Heart right ventricle (tissue), 16 donors: ENCODE measurements at regions of chr11 and their contacts with region 1.

Region 1: GRCh38 chr11:11265994-11266606 is 87.0 kb downstream of the CSNK2A3 start:
- DNase-seq: peak; percentile 27 to 62
- ATAC-seq: peak in 6 of 8 donors; percentile 43 to 81 (median 60)
- H3K4me3 ChIP-seq: no peak overlapping the region
- H3K27ac ChIP-seq: no peak overlapping the region
- H3K4me1 ChIP-seq: peaks cover 0 to 15% (median 8%) of the 10 kb centered on the region in 9 donors
- H3K27me3 ChIP-seq: no peaks in the 10 kb centered on the region
- CTCF ChIP-seq: peak; percentile 63 to 87 (median 85)

Region 2: DNA sequence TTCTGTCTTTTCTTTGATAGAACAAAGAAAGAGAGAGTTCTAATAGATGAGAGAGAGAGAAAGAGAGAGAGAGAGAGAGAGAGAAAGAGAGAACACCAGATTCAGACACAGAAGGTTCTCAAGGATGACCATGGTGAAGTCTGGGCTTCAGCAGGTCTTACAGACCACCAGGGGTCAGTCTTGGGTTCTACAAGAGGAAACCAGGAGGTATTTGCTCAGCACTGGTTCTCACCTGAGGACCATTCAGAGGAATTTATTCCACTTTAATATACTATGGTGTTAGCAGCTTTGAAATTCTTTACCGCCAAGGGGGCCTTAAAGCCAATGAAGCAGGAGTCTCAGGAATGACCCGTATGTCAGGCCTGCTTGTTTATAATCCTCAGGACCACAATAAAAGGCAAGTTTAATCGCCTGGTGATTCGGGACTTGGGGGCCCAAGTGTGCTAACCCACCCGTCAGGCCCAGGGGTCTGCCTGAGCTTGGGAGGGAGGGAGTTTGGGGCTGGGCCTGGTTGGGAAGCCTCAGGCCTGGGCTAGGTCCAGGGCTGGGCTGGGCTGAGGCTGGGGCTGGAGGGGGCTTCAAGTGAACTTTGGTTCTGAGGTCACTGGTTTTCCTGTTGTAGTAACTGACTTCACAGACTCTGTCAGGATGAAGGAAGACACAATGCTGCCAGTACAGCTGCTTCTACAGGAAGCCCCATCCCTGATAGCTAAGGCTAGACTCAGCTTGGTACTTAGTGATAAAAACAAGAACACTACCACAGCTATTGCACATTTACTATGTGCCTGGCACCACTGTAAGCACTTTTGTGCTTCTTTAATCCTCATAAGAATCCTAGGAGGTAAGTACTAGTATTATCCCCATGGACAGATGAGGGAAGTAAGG is 229.0 kb before region 1 on chr11:
- intact Hi-C with region 1: loop called in 9 of 10 experiments (anchors 1 to 10 kb)
- DNase-seq: peak in 1 of 2 donors; percentile 57
- ATAC-seq: peak in 7 of 8 donors; percentile 74 to 88 (median 85)
- H3K4me3 ChIP-seq: no peak overlapping the region
- H3K27ac ChIP-seq: no peak overlapping the region
- H3K4me1 ChIP-seq: peaks cover 0 to 8% (median 0%) of the 10 kb centered on the region in 9 donors
- H3K27me3 ChIP-seq: no peaks in the 10 kb centered on the region
- CTCF ChIP-seq: peak; percentile 66 to 87 (median 82)

Region 3: GRCh38 chr11:11157185-11157584 is 108.9 kb before region 1 on chr11:
- intact Hi-C with region 1: loop called in 2 of 10 experiments (anchors 5 to 10 kb)
- DNase-seq: peak in 1 of 2 donors; percentile 22
- ATAC-seq: peak in 4 of 8 donors; percentile 34 to 50 (median 44)
- H3K4me3 ChIP-seq: no peak overlapping the region
- H3K27ac ChIP-seq: no peak overlapping the region
- H3K4me1 ChIP-seq: peaks cover 0 to 9% (median 0%) of the 10 kb centered on the region in 9 donors
- H3K27me3 ChIP-seq: no peaks in the 10 kb centered on the region
- CTCF ChIP-seq: peak in 7 of 9 donors; percentile 28 to 58 (median 40)

Region 4: GRCh38 chr11:11163236-11163635 is 102.9 kb before region 1 on chr11:
- intact Hi-C with region 1: loop called in 2 of 10 experiments (anchors 5 to 10 kb)
- DNase-seq: no peak
- ATAC-seq: no peak
- H3K4me3 ChIP-seq: no peak overlapping the region
- H3K27ac ChIP-seq: no peak overlapping the region
- H3K4me1 ChIP-seq: peaks cover 0 to 3% (median 0%) of the 10 kb centered on the region in 9 donors
- H3K27me3 ChIP-seq: no peaks in the 10 kb centered on the region
- CTCF ChIP-seq: peak in 2 of 9 donors; percentile 12 to 28

Region 5: GRCh38 chr11:11416502-11416901 is 150.4 kb after region 1 on chr11:
- intact Hi-C with region 1: no loop called
- DNase-seq: no peak
- ATAC-seq: peak in 5 of 8 donors; percentile 10 to 61 (median 41)
- H3K4me3 ChIP-seq: no peak overlapping the region
- H3K27ac ChIP-seq: no peak overlapping the region
- H3K4me1 ChIP-seq: peaks cover 6 to 50% (median 32%) of the 10 kb centered on the region in 9 donors
- H3K27me3 ChIP-seq: peaks cover 0 to 50% (median 0%) of the 10 kb centered on the region in 7 donors
- CTCF ChIP-seq: no peak